SK-N-SH (cell line): ENCODE measurements at regions of chr1 and their contacts with region 1.

Region 1: DNA sequence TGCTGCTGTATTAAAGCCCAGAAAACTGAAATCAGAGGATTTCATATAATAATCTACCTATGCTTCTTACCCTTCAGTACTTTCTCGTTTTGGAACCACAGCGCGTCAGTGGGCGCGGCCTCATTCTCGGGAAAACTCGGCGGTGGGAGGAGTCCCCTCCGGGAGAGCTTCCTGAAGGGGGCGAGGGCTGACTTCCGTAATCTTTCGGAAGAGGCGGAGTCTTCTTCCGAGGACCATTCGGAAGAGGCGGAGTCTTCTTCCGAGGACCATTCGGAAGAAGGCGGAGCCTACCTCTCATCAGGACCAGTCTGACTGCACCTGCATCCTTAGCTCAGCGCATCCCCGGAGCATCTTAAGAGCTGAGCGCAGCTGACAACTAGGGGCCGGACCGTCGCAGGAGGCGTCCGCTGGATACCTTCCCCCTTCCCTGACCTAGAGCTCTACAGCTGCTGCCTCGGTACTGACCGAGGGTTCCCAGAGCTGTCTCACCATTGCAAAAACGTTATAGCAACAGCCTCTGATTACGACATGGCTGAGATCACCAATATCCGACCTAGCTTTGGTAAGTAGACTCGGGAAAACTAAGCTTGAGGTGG is at the start of gene SYT11:
- DNase-seq: peak; percentile 87
- H3K4me3 ChIP-seq: peak within 1 kb of the TSS; percentile 66 to 89
- H3K27ac ChIP-seq: peak within 1 kb of the TSS; percentile 95 to 96
- H3K4me1 ChIP-seq: peaks cover 9 to 17% of the 10 kb centered on the region in 2 experiments; a peak in 3 of 4 replicates
- H3K27me3 ChIP-seq: no peaks in the 10 kb centered on the region
- CTCF ChIP-seq: no peak
- EP300 ChIP-seq: no peak
- RAD21 ChIP-seq: peak; percentile 6; the same call in 1 of the 2 replicates
- polyA plus RNA-seq, gene SYT11: 26.7 and 37.0 TPM in 2 replicates

Region 2: GRCh38 chr1:155871390-155871789 is 12.1 kb after region 1 on chr1:
- CTCF ChIA-PET with region 1: no interaction called
- POLR2A ChIA-PET with region 1: interaction called, 32 read pairs
- DNase-seq: peak; percentile 73
- H3K4me3 ChIP-seq: no peak overlapping the region
- H3K27ac ChIP-seq: peak overlapping the region in 1 of 2 experiments; percentile 61; a peak in 2 of 4 replicates
- H3K4me1 ChIP-seq: peaks cover 0 to 24% of the 10 kb centered on the region in 2 experiments; a peak in 3 of 4 replicates
- H3K27me3 ChIP-seq: no peaks in the 10 kb centered on the region
- CTCF ChIP-seq: no peak
- EP300 ChIP-seq: no peak; a peak in 1 of 4 replicates
- RAD21 ChIP-seq: no peak